ENCODE measurements at regions of chr2 and their contacts with region 1.

Region 1: DNA sequence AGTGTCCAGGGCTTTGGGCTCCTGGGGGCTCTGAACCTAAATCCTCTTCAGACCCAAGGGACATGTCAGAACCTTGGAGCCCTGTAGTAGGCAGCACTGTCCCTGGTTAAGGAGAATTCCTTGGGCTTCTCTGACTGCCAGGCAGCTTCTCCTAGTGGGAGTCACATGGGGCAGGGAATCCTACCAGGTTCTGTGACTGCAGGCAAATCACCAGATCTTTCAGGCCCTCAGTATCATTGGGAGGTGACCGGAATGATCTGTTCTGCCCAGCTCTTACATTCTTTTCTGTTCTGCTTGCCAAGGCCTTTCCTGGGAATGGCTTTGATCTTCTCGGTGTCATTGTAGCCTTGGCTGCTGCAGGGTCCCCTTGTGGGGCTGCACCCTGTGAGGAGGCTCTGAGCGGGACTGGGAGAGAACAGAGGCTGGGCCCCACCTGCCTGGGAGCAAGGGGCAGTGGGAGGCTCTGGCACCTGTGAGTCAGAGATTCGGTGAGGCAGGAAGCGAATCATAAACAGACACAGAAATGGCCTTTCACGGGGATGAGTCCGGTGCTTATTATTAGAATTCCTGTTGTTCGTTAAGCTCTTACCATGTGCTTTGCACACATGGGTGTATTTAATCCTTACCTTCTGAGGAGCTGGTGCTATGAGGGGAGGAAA is 14.1 kb downstream of the CEP68 start:
- DNase-seq: no peak
- ATAC-seq: peak; percentile 42

Region 2: GRCh38 chr2:65129826-65130663 is 59.7 kb after region 1 on chr2 and contains the start of gene RAB1A:
- intact Hi-C with region 1: loop called (anchors 10 kb)
- DNase-seq: peak; percentile 100
- ATAC-seq: peak; percentile 95
- total RNA-seq, gene RAB1A: 115 TPM

Measured in Right ventricle myocardium superior (tissue), 1 donor.